ENCODE measurements at regions of chr10 and their contacts with region 1.

Region 1: GRCh38 chr10:109480836-109481235 is 442.5 kb downstream of the XPNPEP1 start:
- DNase-seq: no peak
- H3K4me3 ChIP-seq: no peak overlapping the region
- H3K27ac ChIP-seq: no peak overlapping the region
- H3K4me1 ChIP-seq: no peaks in the 10 kb centered on the region
- H3K27me3 ChIP-seq: no peaks in the 10 kb centered on the region
- CTCF ChIP-seq: no peak

Region 2: DNA sequence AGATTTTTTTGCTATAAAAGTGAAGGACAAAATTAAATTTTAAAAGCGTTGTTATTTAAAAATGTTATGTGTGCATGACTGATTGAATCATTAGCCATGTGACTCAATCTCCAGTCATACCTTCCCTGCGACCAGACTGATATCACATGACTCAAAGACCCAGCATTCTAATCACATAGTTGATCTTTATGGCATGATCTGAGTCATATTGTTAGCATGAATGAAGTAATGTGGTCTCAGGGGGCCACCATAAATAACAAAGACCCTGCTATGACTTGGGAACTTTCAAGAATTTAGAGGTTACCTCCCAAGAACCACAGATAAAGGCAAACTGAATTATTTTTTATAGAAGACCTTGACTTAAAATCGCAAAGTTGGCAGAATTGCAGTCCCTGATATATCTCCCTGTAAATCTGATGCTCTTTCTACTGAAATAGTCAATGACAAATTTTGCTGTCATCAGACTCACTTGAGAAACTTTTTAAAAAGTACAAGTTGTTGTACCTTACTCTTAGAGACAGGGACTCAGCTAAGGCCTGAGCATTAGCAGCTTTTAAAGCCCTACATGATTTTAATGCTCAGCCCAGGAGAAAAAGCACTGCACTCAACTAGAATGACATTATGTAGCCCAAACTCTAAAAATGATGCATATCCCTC is 274.8 kb before region 1 on chr10:
- CTCF ChIA-PET with region 1: no interaction called
- POLR2A ChIA-PET with region 1: interaction called, 26 read pairs
- intact Hi-C with region 1: no loop called
- DNase-seq: peak in 1 of 2 experiments; percentile 34
- H3K4me3 ChIP-seq: no peak overlapping the region
- H3K27ac ChIP-seq: no peak overlapping the region
- H3K4me1 ChIP-seq: no peaks in the 10 kb centered on the region
- H3K27me3 ChIP-seq: no peaks in the 10 kb centered on the region
- CTCF ChIP-seq: no peak